ENCODE measurements at regions of chr14 and their contacts with region 1.

Region 1: DNA sequence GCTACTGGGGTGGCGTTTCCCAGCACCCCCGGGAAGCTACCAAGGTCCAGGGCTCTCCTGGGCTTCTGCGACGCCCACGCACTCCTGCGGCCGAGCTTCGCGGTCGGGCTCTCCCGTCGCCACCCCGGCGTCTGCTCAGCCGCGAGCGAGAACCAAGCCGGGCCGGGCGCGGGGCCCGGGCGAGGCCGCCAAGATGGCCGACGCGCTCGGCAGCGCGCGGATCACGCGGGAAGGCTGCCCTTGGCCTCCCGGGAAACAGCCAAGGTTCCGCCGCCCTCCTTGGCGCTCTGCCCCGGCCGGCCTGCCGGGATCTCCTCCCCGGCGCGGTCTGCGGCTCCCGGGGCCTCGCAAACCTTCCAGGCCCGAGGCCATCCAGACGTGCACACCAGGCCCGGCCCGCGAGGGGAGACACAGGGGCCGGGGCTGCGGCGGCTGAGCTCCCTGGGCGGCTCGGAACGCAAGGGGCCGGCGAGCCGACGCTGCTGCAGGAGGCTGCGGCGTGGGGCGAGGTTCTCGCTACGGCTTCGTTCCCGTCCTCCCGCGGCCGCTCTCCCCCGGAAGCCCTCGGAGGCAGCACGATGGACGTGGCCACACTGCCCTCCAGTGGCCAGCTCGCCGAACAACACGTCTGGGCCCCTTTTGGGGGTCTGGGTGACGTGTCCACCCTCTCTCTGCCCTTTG is 23.5 kb upstream of the ZFP36L1 start:
- DNase-seq: peak; percentile 92 to 94
- ATAC-seq: peak; percentile 77 to 90 (median 80)
- H3K4me3 ChIP-seq: peak overlapping the region; percentile 32
- H3K4me3 Mint-ChIP-seq: peak overlapping the region; percentile 80
- H3K27ac ChIP-seq: peak overlapping the region; percentile 98
- H3K27ac Mint-ChIP-seq: peak overlapping the region; percentile 91 to 97
- H3K4me1 ChIP-seq: peaks cover 77% of the 10 kb centered on the region
- H3K4me1 Mint-ChIP-seq: peaks cover 63 to 69% of the 10 kb centered on the region in 2 donors
- H3K27me3 ChIP-seq: no peaks in the 10 kb centered on the region
- H3K27me3 Mint-ChIP-seq: no peaks in the 10 kb centered on the region
- CTCF ChIP-seq: peak; percentile 91

Region 2: DNA sequence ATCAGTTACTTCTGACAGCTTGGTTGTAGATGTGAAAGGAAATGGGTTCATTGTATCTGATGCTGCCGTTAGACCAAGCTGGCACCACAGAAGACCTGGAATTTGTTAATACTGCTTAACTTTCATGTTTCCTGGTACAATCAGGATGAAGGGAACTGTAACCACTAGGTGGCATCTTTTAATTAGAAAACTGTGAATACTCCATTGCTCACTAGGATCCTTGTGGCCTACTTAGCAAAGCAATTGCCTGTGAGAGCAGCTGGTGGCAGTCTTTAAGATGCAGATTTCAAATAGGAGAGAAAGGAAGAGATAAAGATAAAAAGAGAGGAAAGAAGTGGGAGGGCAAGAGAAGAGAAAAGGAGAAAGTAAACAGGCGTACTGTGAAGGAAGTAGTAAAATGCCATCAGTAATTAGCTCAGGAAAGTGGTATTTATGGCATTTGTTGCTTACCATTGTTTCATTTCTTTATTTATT is 882.4 kb before region 1 on chr14:
- intact Hi-C with region 1: loop called (anchors 2 kb)
- DNase-seq: peak in 1 of 2 donors; percentile 66
- ATAC-seq: peak; percentile 50 to 77 (median 54)
- H3K4me3 ChIP-seq: no peak overlapping the region
- H3K4me3 Mint-ChIP-seq: no peak overlapping the region
- H3K27ac ChIP-seq: no peak overlapping the region
- H3K27ac Mint-ChIP-seq: peak overlapping the region in 1 of 2 donors; percentile 2
- H3K4me1 ChIP-seq: no peaks in the 10 kb centered on the region
- H3K4me1 Mint-ChIP-seq: peaks cover 5 to 6% of the 10 kb centered on the region in 2 donors
- H3K27me3 ChIP-seq: no peaks in the 10 kb centered on the region
- H3K27me3 Mint-ChIP-seq: no peaks in the 10 kb centered on the region
- CTCF ChIP-seq: peak; percentile 36

Region 3: GRCh38 chr14:68248481-68249255 is 567.7 kb before region 1 on chr14:
- intact Hi-C with region 1: loop called (anchors 1 kb)
- DNase-seq: peak in 1 of 2 donors; percentile 80
- ATAC-seq: peak; percentile 73 to 80 (median 73)
- H3K4me3 ChIP-seq: no peak overlapping the region
- H3K4me3 Mint-ChIP-seq: no peak overlapping the region
- H3K27ac ChIP-seq: peak overlapping the region; percentile 38
- H3K27ac Mint-ChIP-seq: peak overlapping the region; percentile 51 to 66
- H3K4me1 ChIP-seq: peaks cover 9% of the 10 kb centered on the region
- H3K4me1 Mint-ChIP-seq: peaks cover 13 to 31% of the 10 kb centered on the region in 2 donors
- H3K27me3 ChIP-seq: no peaks in the 10 kb centered on the region
- H3K27me3 Mint-ChIP-seq: no peaks in the 10 kb centered on the region
- CTCF ChIP-seq: peak; percentile 74

Region 4: GRCh38 chr14:68780358-68781160 is 35.8 kb before region 1 on chr14:
- intact Hi-C with region 1: loop called (anchors 5 kb)
- DNase-seq: peak in 1 of 2 donors; percentile 68
- ATAC-seq: peak; percentile 25 to 56 (median 36)
- H3K4me3 ChIP-seq: peak overlapping the region; percentile 0
- H3K4me3 Mint-ChIP-seq: peak overlapping the region; percentile 91
- H3K27ac ChIP-seq: peak overlapping the region; percentile 88
- H3K27ac Mint-ChIP-seq: peak overlapping the region; percentile 94 to 95
- H3K4me1 ChIP-seq: peaks cover 67% of the 10 kb centered on the region
- H3K4me1 Mint-ChIP-seq: peaks cover 59 to 63% of the 10 kb centered on the region in 2 donors
- H3K27me3 ChIP-seq: no peaks in the 10 kb centered on the region
- H3K27me3 Mint-ChIP-seq: no peaks in the 10 kb centered on the region
- CTCF ChIP-seq: no peak

Measured in natural killer cell (primary cell).